Transverse colon (tissue), 4 donors: ENCODE measurements at regions of chr17 and their contacts with region 1.

Region 1: DNA sequence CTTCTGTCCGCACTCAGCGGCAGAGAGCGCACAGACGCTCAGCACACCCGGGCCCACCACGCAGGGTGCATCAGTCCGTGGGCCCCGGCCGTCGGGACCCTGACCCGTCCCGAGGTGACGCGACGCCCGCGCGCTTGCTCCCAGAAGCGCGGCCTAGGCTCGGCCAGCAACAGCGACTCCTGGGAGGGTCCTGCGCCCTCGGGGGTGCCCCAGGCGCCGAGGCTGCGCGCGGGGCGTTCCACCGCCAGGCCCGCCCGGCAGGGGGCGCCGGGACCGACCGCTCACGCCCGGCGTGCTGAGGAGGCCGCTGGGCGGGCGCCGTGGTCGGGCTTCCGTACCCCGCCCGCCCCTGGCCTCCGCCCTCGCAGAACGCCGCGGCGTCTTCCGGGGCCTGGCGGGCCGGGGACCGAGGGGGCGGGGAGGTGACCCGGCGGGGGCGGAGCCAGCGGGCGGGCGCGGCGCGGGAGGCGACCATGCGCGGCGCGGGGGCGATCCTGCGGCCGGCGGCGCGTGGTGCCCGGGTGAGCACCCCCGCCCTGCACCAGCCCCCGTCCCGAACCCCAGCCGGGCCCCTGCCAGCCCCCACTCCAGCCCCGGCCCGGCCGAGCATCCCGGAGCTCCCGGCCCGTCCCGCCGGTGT is at the start of gene CISD3:
- DNase-seq: peak; percentile 93
- H3K4me3 ChIP-seq: peak within 1 kb of the TSS; percentile 75 to 90 (median 81)
- H3K27ac ChIP-seq: peak within 1 kb of the TSS; percentile 94 to 98 (median 96)
- H3K4me1 ChIP-seq: peaks cover 26 to 87% (median 43%) of the 10 kb centered on the region in 4 donors
- H3K27me3 ChIP-seq: no peaks in the 10 kb centered on the region
- CTCF ChIP-seq: peak; percentile 49 to 75 (median 70)
- EP300 ChIP-seq: no peak
- POLR2A ChIP-seq: no peak
- total RNA-seq, gene CISD3: 11.2 to 35.0 (median 20.5) TPM

Region 2: GRCh38 chr17:38702166-38702899 is 27.7 kb before region 1 on chr17:
- in situ Hi-C with region 1: no loop called
- intact Hi-C with region 1: loop called (anchors 2 kb)
- DNase-seq: peak; percentile 91
- H3K4me3 ChIP-seq: peak overlapping the region; percentile 74 to 95 (median 92)
- H3K27ac ChIP-seq: peak overlapping the region; percentile 99
- H3K4me1 ChIP-seq: peaks cover 14 to 39% (median 29%) of the 10 kb centered on the region in 4 donors
- H3K27me3 ChIP-seq: no peaks in the 10 kb centered on the region
- CTCF ChIP-seq: peak in 1 of 5 experiments; percentile 11
- EP300 ChIP-seq: no peak
- POLR2A ChIP-seq: peak; percentile 87

Region 3: GRCh38 chr17:38943607-38944006 is 213.6 kb after region 1 on chr17:
- in situ Hi-C with region 1: no loop called
- intact Hi-C with region 1: no loop called
- DNase-seq: no peak
- H3K4me3 ChIP-seq: no peak overlapping the region
- H3K27ac ChIP-seq: no peak overlapping the region
- H3K4me1 ChIP-seq: peaks cover 0 to 8% (median 2%) of the 10 kb centered on the region in 4 donors
- H3K27me3 ChIP-seq: peaks cover under 1% of the 10 kb centered on the region
- CTCF ChIP-seq: no peak
- EP300 ChIP-seq: no peak
- POLR2A ChIP-seq: no peak